Left ventricle myocardium inferior (tissue), 1 donor: ENCODE measurements at regions of chr5 and their contacts with region 1.

Region 1: DNA sequence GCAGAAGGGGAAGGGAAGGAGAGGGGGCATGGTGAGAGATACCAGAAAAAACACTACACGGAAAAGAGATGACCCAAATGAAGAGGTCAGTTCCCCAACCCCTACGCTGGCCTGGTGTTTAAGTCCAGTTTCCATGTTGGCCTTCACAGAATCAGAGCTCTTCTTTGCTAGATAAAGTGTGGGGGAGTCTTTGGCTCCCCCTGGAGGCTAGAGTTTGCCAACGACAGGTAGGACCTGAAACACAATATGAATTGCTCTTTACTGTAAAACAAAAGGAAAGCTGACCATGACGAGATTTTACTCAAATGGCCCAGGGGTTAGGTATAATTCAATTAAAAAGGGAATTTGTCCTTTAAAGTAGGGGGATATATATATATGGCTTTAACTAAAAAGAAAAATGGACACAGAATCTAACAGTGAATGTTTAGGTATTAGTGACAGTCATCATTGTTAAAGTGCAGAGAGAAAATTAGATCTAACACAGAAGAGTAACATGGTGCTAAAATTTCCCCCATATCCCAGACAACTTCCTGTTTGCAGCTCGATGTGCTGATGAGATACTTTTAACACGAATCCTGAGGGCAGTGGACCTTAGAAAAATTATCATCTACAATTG is 92.0 kb downstream of the SV2C start:
- DNase-seq: no peak
- H3K4me3 ChIP-seq: no peak overlapping the region
- H3K27ac ChIP-seq: no peak overlapping the region
- H3K4me1 ChIP-seq: no peaks in the 10 kb centered on the region
- H3K27me3 ChIP-seq: no peaks in the 10 kb centered on the region
- CTCF ChIP-seq: peak; percentile 69

Region 2: DNA sequence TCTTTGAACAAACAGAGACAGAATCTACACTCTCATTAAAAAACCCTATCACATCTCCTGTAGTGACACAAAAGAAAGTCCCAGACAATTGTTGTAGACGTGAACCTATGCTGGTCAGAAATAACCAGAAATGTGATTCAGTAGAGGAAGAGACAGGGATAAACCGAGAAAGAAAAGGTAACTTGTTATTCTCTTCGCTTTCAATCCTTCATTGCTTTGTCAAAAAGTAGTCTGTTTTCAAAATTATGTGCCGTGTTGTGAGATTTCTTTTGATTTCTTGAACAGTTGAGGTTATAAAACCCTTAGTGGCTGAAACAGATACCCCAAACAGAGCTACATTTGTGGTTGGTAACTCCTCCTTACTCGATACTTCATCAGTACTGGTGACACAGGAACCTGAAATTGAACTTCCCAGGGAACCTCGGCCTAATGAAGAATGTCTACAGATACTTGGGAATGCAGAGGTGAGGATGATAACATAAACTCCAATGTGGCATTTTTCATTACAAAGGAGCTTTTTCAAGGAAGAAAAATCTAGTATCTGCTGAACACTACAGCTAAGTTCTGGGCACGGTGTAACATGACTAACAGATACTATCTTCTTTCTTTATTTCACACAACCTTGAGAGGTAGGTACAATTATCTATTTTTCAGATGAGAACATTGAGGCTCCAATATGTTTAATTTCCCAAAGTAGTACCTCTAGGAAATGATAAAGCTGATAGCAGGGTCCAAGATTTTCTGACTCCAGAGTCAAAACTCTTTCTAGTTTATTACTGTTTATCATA is 823.8 kb before region 1 on chr5:
- intact Hi-C with region 1: no loop called
- DNase-seq: no peak
- H3K4me3 ChIP-seq: no peak overlapping the region
- H3K27ac ChIP-seq: no peak overlapping the region
- H3K4me1 ChIP-seq: no peaks in the 10 kb centered on the region
- H3K27me3 ChIP-seq: no peaks in the 10 kb centered on the region
- CTCF ChIP-seq: no peak

Region 3: DNA sequence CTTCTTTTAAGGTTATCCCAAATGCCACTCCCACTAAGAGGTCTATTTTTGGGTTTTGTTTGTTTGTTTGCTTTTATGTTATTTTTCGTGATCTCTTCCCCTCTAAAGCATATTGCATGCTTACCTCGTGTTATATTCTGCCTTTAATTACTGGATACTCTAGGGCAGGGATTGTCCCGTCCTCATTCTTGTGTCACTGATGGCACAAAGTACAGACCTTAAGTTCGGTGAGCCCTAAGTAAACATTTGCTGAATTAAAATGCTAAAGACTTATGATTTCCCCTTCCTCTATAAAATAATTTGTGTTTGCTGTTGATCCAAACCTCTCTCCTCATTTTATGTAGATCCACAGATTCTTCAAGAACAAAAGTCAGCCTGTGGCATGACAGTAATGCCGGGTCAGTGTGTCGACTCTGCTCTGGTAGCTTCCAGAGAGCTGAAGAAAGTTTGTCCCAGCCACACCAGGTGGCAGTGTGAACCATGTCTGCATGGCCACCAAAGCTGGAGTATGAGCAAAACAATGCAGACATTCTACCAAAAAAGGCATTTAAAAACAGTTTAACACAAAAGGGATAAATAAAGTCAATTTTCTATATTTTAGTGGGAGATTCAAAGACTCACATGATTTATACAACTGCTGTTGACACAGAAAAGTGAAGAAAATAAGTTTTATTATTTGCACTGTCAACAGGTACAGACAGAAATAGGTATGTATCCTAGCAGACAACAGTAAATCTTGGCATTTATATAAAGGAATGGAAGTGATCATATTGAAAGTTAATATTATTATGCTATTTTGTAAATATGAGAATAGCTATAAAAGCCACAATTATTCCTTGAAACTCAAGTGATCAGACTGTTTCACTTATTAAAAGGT is 440.0 kb before region 1 on chr5:
- intact Hi-C with region 1: loop called (anchors 10 kb)
- DNase-seq: peak; percentile 20
- H3K4me3 ChIP-seq: no peak overlapping the region
- H3K27ac ChIP-seq: no peak overlapping the region
- H3K4me1 ChIP-seq: no peaks in the 10 kb centered on the region
- H3K27me3 ChIP-seq: no peaks in the 10 kb centered on the region
- CTCF ChIP-seq: peak; percentile 67

Region 4: DNA sequence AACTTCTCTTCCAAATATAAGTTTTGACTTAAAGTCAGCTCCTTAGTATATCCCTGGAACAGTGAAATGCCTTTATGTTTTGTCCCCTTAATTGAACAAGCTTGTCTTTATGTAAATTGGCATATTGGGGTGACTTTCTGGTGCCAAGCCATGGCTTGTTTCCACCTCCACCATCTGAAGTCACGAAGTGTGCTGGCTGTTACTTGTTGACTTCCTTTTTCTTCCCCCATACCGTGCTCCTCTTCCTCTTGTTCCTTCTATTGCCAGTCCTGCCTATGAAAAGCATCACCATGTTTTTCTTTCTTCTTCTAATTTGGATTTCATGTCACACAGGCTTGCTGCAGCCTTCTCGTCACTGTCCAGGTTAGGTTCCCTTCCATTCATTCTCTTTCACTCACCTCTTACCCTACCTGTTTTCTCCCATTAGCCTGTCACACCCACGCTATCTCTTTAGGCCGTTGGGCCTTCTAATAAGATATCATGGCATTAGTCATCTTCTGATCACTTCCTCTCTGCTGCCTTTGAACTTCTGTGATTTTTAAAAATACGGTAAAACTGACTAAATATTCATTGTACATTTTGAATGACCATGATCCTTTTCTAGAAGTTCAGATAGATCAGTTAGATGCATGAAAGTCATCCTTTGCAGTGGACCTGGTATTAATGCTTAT is 276.0 kb after region 1 on chr5:
- intact Hi-C with region 1: no loop called
- DNase-seq: no peak
- H3K4me3 ChIP-seq: no peak overlapping the region
- H3K27ac ChIP-seq: no peak overlapping the region
- H3K4me1 ChIP-seq: no peaks in the 10 kb centered on the region
- H3K27me3 ChIP-seq: peaks cover 29% of the 10 kb centered on the region
- CTCF ChIP-seq: no peak